Vagina (tissue), 2 donors: ENCODE measurements at regions of chr2 and their contacts with region 1.

Region 1: DNA sequence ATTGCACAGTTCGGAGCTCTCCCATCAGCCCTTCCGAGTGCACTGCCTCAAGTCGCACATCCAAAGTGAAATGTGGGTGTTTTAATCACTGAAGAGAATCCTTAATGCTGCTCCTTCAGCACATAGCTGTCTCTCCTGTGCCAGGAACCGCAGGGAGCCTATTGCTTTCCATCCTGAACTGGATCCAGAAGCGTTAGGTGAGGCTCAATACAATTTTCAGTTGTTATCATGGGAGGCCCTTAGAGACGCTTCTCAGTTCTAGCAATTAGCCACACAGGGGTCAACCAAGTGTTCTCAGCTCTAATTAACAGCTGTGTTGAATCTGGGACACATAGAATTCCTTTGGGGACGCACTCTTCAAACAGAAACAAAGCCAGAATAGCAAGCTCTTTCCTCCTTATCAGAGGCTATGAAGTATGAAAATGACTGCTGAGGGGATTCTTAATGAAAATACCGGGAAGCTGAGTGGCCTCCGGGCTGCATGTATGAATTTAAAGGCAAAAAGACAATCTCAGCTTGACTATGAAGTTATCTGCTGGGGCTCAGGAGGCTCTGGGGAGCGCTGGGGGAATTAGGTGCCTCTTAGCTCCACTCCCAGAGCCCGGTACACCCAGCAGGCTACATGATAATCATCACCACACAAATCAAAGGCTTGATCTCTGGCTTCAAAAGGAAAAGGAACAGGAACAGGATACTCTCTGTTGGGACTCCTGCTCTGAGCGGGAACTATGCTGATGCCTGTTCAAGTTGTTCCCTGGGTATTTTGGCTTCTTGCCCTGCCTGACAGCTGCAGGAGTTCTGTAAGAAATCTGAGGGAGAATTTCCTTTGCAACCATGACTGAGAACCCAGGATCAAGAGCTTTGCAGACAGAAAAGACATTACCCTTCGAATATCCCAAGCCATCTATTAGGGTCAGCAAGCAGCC is 55.4 kb upstream of the NCOA1 start:
- DNase-seq: no peak
- H3K4me3 ChIP-seq: peak overlapping the region in 1 of 2 donors; percentile 9
- H3K27ac ChIP-seq: peak overlapping the region; percentile 44
- H3K4me1 ChIP-seq: peaks cover 16% of the 10 kb centered on the region
- H3K27me3 ChIP-seq: no peaks in the 10 kb centered on the region
- CTCF ChIP-seq: no peak
- POLR2A ChIP-seq: no peak

Region 2: GRCh38 chr2:24329700-24330099 is 106.0 kb before region 1 on chr2:
- intact Hi-C with region 1: no loop called
- DNase-seq: no peak
- H3K4me3 ChIP-seq: no peak overlapping the region
- H3K27ac ChIP-seq: no peak overlapping the region
- H3K4me1 ChIP-seq: peaks cover 31% of the 10 kb centered on the region
- H3K27me3 ChIP-seq: no peaks in the 10 kb centered on the region
- CTCF ChIP-seq: no peak
- POLR2A ChIP-seq: no peak

Region 3: GRCh38 chr2:24382363-24383073 is 53.1 kb before region 1 on chr2:
- intact Hi-C with region 1: no loop called
- DNase-seq: no peak
- H3K4me3 ChIP-seq: no peak overlapping the region
- H3K27ac ChIP-seq: no peak overlapping the region
- H3K4me1 ChIP-seq: no peaks in the 10 kb centered on the region
- H3K27me3 ChIP-seq: no peaks in the 10 kb centered on the region
- CTCF ChIP-seq: peak in 2 of 3 experiments; percentile 31 to 85
- POLR2A ChIP-seq: no peak

Region 4: GRCh38 chr2:24490674-24491625 is 55.3 kb after region 1 on chr2 and contains the start of gene NCOA1:
- intact Hi-C with region 1: loop called (anchors 10 kb)
- DNase-seq: peak in 1 of 2 donors; percentile 90
- H3K4me3 ChIP-seq: peak within 1 kb of the TSS; percentile 85 to 88
- H3K27ac ChIP-seq: peak within 1 kb of the TSS; percentile 94
- H3K4me1 ChIP-seq: peaks cover 48% of the 10 kb centered on the region
- H3K27me3 ChIP-seq: no peaks in the 10 kb centered on the region
- CTCF ChIP-seq: no peak
- POLR2A ChIP-seq: no peak
- total RNA-seq, gene NCOA1: 48.4 TPM